GM10248 (cell line): ENCODE measurements at regions of chr11 and their contacts with region 1.

Region 1: DNA sequence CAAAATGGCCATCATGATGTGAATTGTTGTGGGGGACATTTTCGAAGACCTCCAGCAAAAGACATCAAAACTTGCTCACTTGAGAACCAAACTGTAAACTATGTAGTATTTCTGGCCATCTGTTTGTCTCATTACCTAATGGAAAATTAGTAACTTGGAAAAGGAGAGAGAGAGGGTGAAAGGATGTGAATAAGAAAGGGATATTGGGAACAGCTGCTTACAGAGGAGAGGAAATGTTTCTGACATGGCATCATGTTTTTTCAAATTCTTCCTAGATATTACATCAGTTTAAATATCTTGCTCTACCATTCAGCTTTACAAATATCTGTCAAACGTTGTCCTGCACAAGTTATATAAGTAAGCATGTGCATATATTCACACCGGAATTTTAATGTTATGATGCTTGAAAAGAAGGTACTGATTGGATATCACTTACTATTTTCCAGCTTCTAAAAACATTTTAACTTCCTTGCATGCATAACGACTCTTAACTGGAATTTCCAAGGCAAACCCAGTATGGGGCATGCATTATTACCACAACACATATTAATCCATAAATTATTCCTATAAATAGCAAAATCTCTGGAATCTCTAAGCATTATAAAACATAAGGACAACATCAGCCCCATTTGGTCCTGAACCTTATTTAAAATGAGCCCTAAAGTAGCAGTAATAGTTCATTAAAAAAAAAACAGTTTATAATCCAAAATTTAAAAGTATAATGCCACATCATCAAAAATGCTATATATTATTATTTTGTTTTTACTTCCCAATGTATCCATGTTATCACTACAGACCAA is 20.0 kb downstream of the GUCY1A2 start:
- DNase-seq: no peak
- CTCF ChIP-seq: no peak

Region 2: DNA sequence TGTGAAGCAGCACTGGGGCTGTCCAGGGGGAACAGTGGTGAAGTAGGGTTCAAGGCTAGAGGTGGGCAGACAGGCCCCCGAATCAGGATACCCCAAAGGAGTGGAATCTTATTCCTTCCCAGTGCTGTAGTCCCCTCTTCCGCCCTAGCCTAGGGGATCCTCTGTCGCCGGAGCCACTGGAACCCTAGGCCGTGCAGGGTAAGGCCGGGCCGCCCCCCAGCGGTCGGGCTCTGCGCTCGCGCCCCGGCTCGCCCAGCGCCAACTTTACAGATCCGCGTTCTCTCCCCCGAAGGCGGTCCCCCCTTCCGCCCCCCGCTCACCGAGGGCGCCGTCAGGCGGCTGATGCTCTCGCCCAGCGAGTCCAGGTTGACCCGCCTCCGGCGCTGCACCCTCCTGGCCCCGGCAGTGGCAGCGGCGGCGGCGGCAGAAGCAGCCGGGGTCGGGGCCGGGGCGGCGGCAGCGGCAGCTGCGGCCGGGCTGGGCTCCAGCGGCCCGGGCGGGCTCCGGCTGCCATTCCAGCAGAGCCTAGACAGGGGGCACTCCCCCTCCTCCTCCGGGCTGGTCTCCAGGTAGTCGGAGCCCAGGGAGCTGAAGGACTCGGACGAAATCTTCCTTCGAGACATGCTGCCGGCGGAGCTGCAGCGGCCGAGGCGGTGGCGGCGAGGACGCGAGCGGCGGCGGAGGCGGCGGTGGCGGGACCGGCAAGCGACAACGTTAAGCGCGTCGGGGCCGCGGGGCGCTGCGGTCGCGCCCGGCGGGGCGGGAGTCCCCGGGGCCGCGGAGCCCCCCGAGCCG is 19.3 kb after region 1 on chr11:
- CTCF ChIA-PET with region 1: interaction called, 10 read pairs
- POLR2A ChIA-PET with region 1: no interaction called
- DNase-seq: peak; percentile 46
- CTCF ChIP-seq: peak; percentile 60